Activated T-helper 2 cell treated with anti-CD3 and anti-CD28 coated beads, Interferon-gamma antibody, Interleukin-2, Interleukin-4, amounts not matched to agents 10 μg/mL and 5 μg/mL and 100 μg/mL, durations not matched to agents 14 hours and 24 hours and 36 hours (primary cell): ENCODE measurements at regions of chr3 and their contacts with region 1.

Region 1: GRCh38 chr3:132722164-132723024 is at the start of gene NPHP3:
- DNase-seq: peak; percentile 87
- H3K4me3 Mint-ChIP-seq: peak within 1 kb of the TSS; percentile 91
- H3K27ac Mint-ChIP-seq: peak within 1 kb of the TSS; percentile 87
- H3K4me1 Mint-ChIP-seq: peaks cover 30% of the 10 kb centered on the region
- H3K27me3 Mint-ChIP-seq: no peaks in the 10 kb centered on the region
- total RNA-seq, gene NPHP3: 16.1 and 20.5 TPM in 2 replicates

Region 2: DNA sequence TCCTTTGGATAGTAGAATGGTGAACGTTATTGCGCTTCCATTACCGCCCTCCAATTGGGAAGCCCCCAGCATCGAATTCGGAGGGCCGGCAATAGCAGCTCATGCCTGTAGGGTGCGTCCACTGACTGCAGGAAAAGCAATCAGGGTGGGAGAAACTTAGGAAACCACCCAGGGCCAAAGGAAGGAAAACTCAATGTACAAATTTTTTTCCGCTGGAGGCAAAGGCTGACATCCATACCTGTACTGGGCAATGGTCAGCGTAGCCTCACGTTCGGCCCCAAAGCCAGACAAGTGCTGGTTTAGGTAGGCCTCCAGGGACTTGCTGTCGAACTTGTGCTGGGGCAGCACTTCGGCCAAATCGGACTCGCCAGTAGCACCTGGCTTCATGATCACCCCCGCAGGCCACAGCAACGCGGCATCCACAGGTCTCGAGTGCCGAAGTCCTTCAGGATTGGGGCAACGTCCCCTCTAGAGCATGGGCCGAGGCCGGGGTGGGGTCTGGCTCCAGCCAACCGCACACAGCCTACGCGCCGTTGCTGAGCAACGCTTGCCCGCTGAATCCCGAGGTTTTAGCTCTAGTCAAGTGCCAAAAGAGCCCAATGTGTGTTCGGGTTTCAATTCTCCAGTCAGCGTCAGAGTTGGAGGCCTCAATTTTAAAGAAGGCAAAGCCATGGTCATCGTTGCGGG is 62.9 kb before region 1 on chr3 and contains the start of gene ACAD11:
- intact Hi-C with region 1: loop called (anchors 1 kb)
- DNase-seq: peak; percentile 33
- H3K4me3 Mint-ChIP-seq: peak within 1 kb of the TSS; percentile 94
- H3K27ac Mint-ChIP-seq: peak within 1 kb of the TSS; percentile 97
- H3K4me1 Mint-ChIP-seq: peaks cover 38% of the 10 kb centered on the region
- H3K27me3 Mint-ChIP-seq: no peaks in the 10 kb centered on the region
- total RNA-seq, gene ACAD11: 14.9 and 18.3 TPM in 2 replicates

Region 3: GRCh38 chr3:133211449-133211848 is 489.1 kb after region 1 on chr3:
- intact Hi-C with region 1: loop called (anchors 10 kb)
- DNase-seq: no peak
- H3K4me3 Mint-ChIP-seq: no peak overlapping the region
- H3K27ac Mint-ChIP-seq: no peak overlapping the region
- H3K4me1 Mint-ChIP-seq: peaks cover 20% of the 10 kb centered on the region
- H3K27me3 Mint-ChIP-seq: peaks cover 4% of the 10 kb centered on the region

Region 4: DNA sequence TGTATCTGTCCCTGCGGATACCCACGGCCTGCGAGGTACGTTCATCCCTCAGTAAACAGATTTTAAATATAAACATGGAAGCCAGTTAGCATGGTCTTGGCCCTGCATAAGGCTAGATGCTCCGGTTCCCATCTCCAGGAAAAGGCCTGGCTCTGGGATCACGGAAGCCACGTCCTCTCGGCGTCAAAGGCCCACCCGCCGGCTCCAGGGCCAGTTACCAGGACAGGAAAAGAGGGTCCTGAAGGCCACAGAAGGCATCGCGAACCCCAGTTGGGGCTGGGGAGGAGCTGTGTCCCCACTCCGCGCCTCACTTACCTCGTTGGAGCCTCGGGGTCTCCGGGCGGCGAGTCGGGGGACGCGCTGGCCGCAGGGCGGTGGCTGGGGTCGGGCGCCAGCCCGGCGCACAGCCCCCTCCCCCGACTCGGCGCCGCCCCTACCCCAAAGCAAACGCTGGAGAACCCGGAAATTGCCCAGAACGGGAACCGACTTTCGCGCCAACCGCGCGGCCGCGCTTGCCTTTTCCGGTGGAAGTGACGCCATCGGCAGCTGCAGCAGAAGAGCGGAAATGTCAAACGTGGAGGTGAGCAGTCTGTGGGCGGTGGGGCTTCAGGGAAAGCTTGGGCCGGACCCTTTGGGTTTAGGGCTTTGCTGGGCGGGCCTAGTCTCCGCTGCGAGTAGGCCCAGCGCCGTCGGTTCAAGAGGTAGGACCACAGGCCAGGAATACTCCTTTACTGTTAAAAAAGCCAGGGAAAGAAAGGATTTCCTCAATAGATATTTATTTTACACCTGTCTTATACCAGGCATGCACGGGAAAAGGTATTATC is 939.3 kb after region 1 on chr3 and contains the start of gene TOPBP1:
- intact Hi-C with region 1: loop called (anchors 2 kb)
- DNase-seq: peak; percentile 86
- H3K4me3 Mint-ChIP-seq: peak within 1 kb of the TSS; percentile 99
- H3K27ac Mint-ChIP-seq: peak within 1 kb of the TSS; percentile 97
- H3K4me1 Mint-ChIP-seq: peaks cover 33% of the 10 kb centered on the region
- H3K27me3 Mint-ChIP-seq: no peaks in the 10 kb centered on the region
- total RNA-seq, gene TOPBP1: 90.6 and 91.2 TPM in 2 replicates

Region 5: DNA sequence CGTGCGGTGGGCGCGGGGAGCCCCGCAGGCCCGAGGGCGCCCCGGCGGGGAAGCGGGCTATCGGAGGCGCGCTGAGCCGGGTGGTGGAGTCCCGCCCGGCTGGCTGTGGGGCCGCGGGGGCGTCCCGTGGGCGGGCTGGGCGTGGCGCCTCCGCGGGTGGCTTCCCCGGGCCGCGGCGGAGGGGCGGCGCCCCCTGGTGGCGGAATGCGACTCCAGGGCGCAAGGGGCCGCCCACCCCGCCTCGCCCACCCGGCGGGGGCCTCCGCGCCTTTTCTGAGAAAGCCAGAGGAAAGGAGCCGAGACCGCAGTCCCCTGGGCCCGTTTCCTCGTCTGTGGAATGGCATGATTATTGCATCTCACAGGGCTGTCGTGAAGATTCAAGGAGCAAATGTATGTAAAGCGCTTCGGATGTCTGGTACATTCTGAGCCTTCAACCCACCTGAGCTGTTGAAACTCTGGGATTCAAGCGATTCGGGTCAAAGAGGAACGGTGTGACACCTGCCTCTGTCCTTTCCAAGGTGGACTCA is 1205.2 kb after region 1 on chr3:
- intact Hi-C with region 1: loop called (anchors 5 kb)
- DNase-seq: peak; percentile 54
- H3K4me3 Mint-ChIP-seq: peak overlapping the region; percentile 62
- H3K27ac Mint-ChIP-seq: no peak overlapping the region
- H3K4me1 Mint-ChIP-seq: peaks cover 9% of the 10 kb centered on the region
- H3K27me3 Mint-ChIP-seq: peaks cover 29% of the 10 kb centered on the region